IMR-90 (cell line): ENCODE measurements at regions of chr5 and their contacts with region 1.

Region 1: DNA sequence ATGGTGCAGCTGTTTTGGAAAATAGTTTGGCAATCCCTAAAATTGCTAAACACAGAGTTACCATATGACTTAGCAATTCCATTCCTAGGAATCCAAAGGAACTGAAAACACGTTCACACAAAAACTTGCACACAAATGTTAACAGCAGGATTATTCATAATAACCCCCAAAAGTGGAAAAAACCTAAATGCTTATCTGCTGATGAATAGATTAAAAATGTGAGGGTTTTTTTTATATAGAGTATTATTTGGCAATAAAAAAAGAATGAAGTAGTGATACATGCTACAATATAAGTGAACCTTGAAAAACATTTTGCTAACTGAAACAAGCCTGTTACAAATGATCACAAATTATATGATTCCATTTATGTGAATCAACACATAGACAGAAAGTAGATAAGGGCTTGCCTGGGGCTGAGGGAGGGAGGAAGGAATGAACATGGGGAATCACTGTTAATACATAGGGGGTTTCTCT is 45.1 kb upstream of the TRIO start:
- DNase-seq: peak; percentile 94
- ATAC-seq: peak; percentile 73
- H3K4me3 ChIP-seq: no peak overlapping the region
- H3K27ac ChIP-seq: peak overlapping the region; percentile 94
- H3K4me1 ChIP-seq: peaks cover 6% of the 10 kb centered on the region; the same call in 1 of the 2 replicates
- H3K27me3 ChIP-seq: no peaks in the 10 kb centered on the region
- CTCF ChIP-seq: no peak
- POLR2A ChIP-seq: no peak
- RAD21 ChIP-seq: 0 out of 2 replicates have a peak, but pooled peaks have one; percentile 1

Region 2: GRCh38 chr5:13994621-13995253 is 103.3 kb before region 1 on chr5:
- CTCF ChIA-PET with region 1: no interaction called
- POLR2A ChIA-PET with region 1: no interaction called
- dilution Hi-C with region 1: no loop called
- in situ Hi-C with region 1: no loop called
- intact Hi-C with region 1: loop called (anchors 5 kb)
- DNase-seq: peak; percentile 94
- ATAC-seq: peak; percentile 82
- H3K4me3 ChIP-seq: no peak overlapping the region
- H3K27ac ChIP-seq: peak overlapping the region; percentile 91
- H3K4me1 ChIP-seq: peaks cover 25% of the 10 kb centered on the region
- H3K27me3 ChIP-seq: no peaks in the 10 kb centered on the region
- CTCF ChIP-seq: no peak
- POLR2A ChIP-seq: no peak
- RAD21 ChIP-seq: 0 out of 2 replicates have a peak, but pooled peaks have one; percentile 1

Region 3: DNA sequence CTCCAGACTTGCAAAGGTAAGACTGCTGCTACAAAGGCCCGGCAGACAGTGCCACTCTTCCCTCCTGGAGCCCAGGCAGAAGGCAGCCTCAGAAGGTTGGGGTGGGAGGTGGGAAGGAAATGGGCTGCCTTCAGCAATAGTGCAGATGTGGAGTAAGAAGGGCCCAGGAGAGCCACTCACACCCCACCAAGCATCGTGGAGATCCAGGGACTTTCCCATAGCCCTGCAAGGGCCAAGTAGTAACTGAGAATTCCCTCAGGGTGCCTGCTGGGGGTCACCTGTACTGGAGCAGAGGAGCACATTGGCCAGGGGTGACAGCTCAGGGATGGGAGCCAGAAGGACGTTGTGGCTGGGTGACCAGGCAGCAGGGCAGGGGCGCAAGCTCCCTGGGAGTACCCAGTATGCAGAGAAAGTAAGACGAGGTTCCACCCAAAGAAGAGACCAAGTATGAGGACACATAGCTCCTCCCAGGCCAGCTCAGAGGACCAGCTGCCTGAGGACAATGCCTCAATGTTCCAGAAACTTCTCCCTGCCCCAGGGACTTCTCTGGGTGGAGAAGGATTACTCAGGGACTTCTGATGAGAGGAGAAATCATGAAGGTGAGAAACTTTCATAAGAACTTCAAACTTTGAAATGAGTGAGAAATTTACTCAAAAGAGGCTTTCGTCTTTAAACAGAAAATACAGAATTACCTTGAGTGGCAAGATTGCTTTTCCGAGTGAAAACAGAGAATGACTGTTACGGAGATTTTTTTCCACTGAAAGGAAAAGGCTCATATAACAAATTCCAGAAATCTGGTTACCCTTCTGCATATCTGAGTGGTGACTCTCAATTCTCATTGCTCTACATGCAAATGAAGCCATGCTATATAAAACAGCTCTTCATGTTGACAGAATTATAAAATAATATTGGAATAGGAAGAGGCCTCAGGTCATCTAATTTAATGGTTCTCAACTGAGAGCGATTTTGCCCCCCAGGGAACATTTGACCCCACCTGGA is 42.8 kb before region 1 on chr5:
- CTCF ChIA-PET with region 1: no interaction called
- POLR2A ChIA-PET with region 1: no interaction called
- dilution Hi-C with region 1: no loop called
- in situ Hi-C with region 1: no loop called
- intact Hi-C with region 1: loop called (anchors 2 kb)
- DNase-seq: peak; percentile 81
- ATAC-seq: peak; percentile 51
- H3K4me3 ChIP-seq: no peak overlapping the region; the same call in 1 of the 2 replicates
- H3K27ac ChIP-seq: peak overlapping the region; percentile 100
- H3K4me1 ChIP-seq: peaks cover 24% of the 10 kb centered on the region
- H3K27me3 ChIP-seq: no peaks in the 10 kb centered on the region
- CTCF ChIP-seq: no peak
- POLR2A ChIP-seq: no peak
- RAD21 ChIP-seq: no peak

Region 4: DNA sequence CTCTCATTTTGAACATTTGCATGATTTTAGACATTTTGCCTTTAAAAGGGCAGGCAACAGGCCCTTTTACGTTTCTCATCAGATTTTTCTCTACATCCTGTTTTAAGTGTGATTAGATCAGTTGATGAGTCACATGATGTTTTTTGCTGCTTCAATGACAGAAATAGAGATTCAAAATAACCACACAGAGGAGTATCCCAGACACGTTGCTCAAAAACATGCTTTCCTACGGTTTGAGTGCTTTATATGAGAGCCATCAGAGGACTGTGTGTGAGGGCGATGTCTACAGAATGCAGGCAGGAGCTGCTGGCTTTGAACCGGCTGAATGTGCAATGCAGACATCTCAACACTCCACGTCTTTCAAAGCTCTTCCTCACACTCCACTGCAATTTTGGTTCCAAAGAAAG is 608.6 kb after region 1 on chr5:
- CTCF ChIA-PET with region 1: no interaction called
- POLR2A ChIA-PET with region 1: no interaction called
- dilution Hi-C with region 1: no loop called
- in situ Hi-C with region 1: no loop called
- intact Hi-C with region 1: no loop called
- DNase-seq: peak; percentile 79
- ATAC-seq: peak; percentile 86
- H3K4me3 ChIP-seq: no peak overlapping the region
- H3K27ac ChIP-seq: peak overlapping the region; percentile 28
- H3K4me1 ChIP-seq: peaks cover 7% of the 10 kb centered on the region
- H3K27me3 ChIP-seq: no peaks in the 10 kb centered on the region
- CTCF ChIP-seq: no peak
- POLR2A ChIP-seq: no peak
- RAD21 ChIP-seq: no peak